ENCODE measurements at regions of chr2 and their contacts with region 1.

Region 1: DNA sequence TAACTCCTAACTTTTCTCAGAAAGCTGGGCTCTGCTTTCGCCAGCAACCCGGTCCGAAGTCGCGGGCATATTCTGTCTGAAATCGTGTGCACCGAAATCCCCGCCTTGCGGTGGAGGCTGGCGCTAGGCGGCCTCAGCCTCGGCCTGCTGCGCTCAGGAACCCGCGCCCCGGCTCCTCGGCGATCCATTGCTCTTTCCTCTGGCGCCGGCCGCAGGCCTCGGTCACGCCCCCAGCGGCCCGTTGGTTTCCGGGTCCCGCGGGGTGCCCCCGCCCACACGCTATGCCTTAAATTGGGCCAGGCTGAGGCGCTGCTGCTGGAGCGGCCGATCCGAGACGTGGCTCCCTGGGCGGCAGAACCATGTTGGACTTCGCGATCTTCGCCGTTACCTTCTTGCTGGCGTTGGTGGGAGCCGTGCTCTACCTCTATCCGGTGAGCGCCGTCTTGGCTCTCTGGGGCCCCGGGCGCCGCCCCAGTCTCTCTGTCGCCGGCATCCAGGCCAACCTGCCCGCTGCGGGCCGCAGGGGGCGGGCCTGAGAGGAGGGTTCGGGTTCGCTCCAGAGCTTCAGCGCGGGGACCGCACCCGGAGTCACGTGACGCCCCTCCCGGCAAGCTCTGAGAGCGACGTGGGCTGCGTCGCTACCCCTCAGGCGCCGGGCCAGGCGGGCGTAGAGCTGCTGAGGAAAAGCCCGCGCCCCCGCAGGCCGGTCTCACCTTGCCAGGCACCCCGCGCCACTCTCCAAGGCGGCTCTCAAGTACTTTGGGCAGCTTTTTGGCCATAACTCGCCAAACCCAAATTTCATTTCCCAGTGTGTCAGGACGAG is at the start of gene CYP20A1:
- DNase-seq: peak; percentile 93 to 98 (median 97)
- ATAC-seq: peak; percentile 79
- H3K4me3 ChIP-seq: peak within 1 kb of the TSS; percentile 88
- H3K4me3 Mint-ChIP-seq: peak within 1 kb of the TSS; percentile 96
- H3K27ac ChIP-seq: peak within 1 kb of the TSS; percentile 95 to 97
- H3K27ac Mint-ChIP-seq: peak within 1 kb of the TSS; percentile 99
- H3K4me1 ChIP-seq: peaks cover 28% of the 10 kb centered on the region
- H3K4me1 Mint-ChIP-seq: peaks cover 45% of the 10 kb centered on the region
- H3K27me3 ChIP-seq: no peaks in the 10 kb centered on the region
- H3K27me3 Mint-ChIP-seq: no peaks in the 10 kb centered on the region
- CTCF ChIP-seq: peak; percentile 12
- total RNA-seq, gene CYP20A1: 21.9 to 22.6 TPM

Region 2: GRCh38 chr2:202450785-202451184 is 788.1 kb before region 1 on chr2:
- CTCF ChIA-PET with region 1: no interaction called
- POLR2A ChIA-PET with region 1: no interaction called
- intact Hi-C with region 1: no loop called
- DNase-seq: no peak
- ATAC-seq: no peak
- H3K4me3 ChIP-seq: no peak overlapping the region
- H3K4me3 Mint-ChIP-seq: no peak overlapping the region
- H3K27ac ChIP-seq: no peak overlapping the region
- H3K27ac Mint-ChIP-seq: no peak overlapping the region
- H3K4me1 ChIP-seq: no peaks in the 10 kb centered on the region
- H3K4me1 Mint-ChIP-seq: no peaks in the 10 kb centered on the region
- H3K27me3 ChIP-seq: no peaks in the 10 kb centered on the region
- H3K27me3 Mint-ChIP-seq: no peaks in the 10 kb centered on the region
- CTCF ChIP-seq: no peak

Region 3: GRCh38 chr2:202643012-202643858 is 595.7 kb before region 1 on chr2:
- CTCF ChIA-PET with region 1: no interaction called
- POLR2A ChIA-PET with region 1: no interaction called
- intact Hi-C with region 1: loop called in 1 of 2 experiments (anchors 10 kb)
- DNase-seq: peak in 4 of 14 experiments; percentile 31 to 83 (median 62)
- ATAC-seq: peak; percentile 65
- H3K4me3 ChIP-seq: peak overlapping the region; percentile 43
- H3K4me3 Mint-ChIP-seq: peak overlapping the region; percentile 86
- H3K27ac ChIP-seq: peak overlapping the region; percentile 58 to 65
- H3K27ac Mint-ChIP-seq: no peak overlapping the region
- H3K4me1 ChIP-seq: peaks cover 57% of the 10 kb centered on the region
- H3K4me1 Mint-ChIP-seq: peaks cover 62% of the 10 kb centered on the region
- H3K27me3 ChIP-seq: no peaks in the 10 kb centered on the region
- H3K27me3 Mint-ChIP-seq: no peaks in the 10 kb centered on the region
- CTCF ChIP-seq: no peak

Region 4: GRCh38 chr2:202911512-202912341 is 327.2 kb before region 1 on chr2 and contains the starts of genes CARF and WDR12:
- CTCF ChIA-PET with region 1: interaction called, 3 read pairs
- POLR2A ChIA-PET with region 1: interaction called, 31 read pairs
- intact Hi-C with region 1: loop called (anchors 2 kb)
- DNase-seq: peak; percentile 80 to 95 (median 86)
- ATAC-seq: peak; percentile 81
- H3K4me3 ChIP-seq: peak within 1 kb of the TSS; percentile 79
- H3K4me3 Mint-ChIP-seq: peak within 1 kb of the TSS; percentile 98
- H3K27ac ChIP-seq: peak within 1 kb of the TSS; percentile 72 to 85
- H3K27ac Mint-ChIP-seq: peak within 1 kb of the TSS; percentile 90
- H3K4me1 ChIP-seq: peaks cover 9% of the 10 kb centered on the region
- H3K4me1 Mint-ChIP-seq: peaks cover 40% of the 10 kb centered on the region
- H3K27me3 ChIP-seq: no peaks in the 10 kb centered on the region
- H3K27me3 Mint-ChIP-seq: no peaks in the 10 kb centered on the region
- CTCF ChIP-seq: no peak
- total RNA-seq, gene CARF: 9.0 to 9.6 TPM
- total RNA-seq, gene WDR12: 6.2 to 7.7 TPM

Region 5: GRCh38 chr2:203014456-203015199 is 224.3 kb before region 1 on chr2 and contains the start of gene NBEAL1:
- CTCF ChIA-PET with region 1: interaction called, 3 read pairs
- POLR2A ChIA-PET with region 1: interaction called, 4 read pairs
- intact Hi-C with region 1: loop called (anchors 5 kb)
- DNase-seq: peak; percentile 86 to 99 (median 94)
- ATAC-seq: peak; percentile 87
- H3K4me3 ChIP-seq: peak within 1 kb of the TSS; percentile 88
- H3K4me3 Mint-ChIP-seq: peak within 1 kb of the TSS; percentile 93
- H3K27ac ChIP-seq: peak within 1 kb of the TSS; percentile 64 to 86
- H3K27ac Mint-ChIP-seq: peak within 1 kb of the TSS; percentile 93
- H3K4me1 ChIP-seq: peaks cover 15% of the 10 kb centered on the region
- H3K4me1 Mint-ChIP-seq: peaks cover 50% of the 10 kb centered on the region
- H3K27me3 ChIP-seq: no peaks in the 10 kb centered on the region
- H3K27me3 Mint-ChIP-seq: no peaks in the 10 kb centered on the region
- CTCF ChIP-seq: no peak
- total RNA-seq, gene NBEAL1: 8.3 to 11.2 TPM

Region 6: DNA sequence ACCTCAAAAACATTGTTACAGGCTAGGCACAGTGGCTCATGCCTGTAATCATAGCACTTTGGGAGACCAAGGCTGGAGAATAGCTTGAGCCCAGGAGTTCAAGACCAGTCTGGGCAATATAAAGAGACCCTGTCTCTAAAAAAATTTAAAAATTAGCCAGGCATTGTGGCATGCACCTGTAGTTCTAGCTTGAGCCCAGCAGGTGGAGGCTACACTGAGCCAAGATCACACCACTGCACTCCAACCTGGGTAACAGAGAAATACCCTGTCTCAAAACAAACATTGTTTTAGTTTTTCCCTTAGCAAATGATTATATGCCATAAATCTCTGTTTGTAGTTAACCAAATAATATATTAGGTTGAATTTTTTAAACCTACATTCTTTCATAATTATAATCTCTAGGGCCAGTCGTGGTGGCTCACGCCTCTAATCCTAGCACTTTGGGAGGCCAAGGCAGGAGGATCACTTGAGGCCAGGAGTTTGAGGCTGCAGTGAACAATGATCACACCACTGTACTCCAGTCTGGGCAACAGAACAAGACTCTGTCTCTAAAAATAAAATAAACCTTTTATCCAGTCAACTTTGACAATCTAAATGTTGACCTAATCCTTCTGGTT is 13.4 kb before region 1 on chr2:
- CTCF ChIA-PET with region 1: interaction called, 16 read pairs
- POLR2A ChIA-PET with region 1: interaction called, 20 read pairs
- intact Hi-C with region 1: loop called in 1 of 2 experiments (anchors 1 kb)
- DNase-seq: peak in 10 of 14 experiments; percentile 8 to 68 (median 20)
- ATAC-seq: peak; percentile 94
- H3K4me3 ChIP-seq: no peak overlapping the region
- H3K4me3 Mint-ChIP-seq: no peak overlapping the region
- H3K27ac ChIP-seq: no peak overlapping the region
- H3K27ac Mint-ChIP-seq: no peak overlapping the region
- H3K4me1 ChIP-seq: no peaks in the 10 kb centered on the region
- H3K4me1 Mint-ChIP-seq: no peaks in the 10 kb centered on the region
- H3K27me3 ChIP-seq: no peaks in the 10 kb centered on the region
- H3K27me3 Mint-ChIP-seq: no peaks in the 10 kb centered on the region
- CTCF ChIP-seq: peak; percentile 74

Region 7: DNA sequence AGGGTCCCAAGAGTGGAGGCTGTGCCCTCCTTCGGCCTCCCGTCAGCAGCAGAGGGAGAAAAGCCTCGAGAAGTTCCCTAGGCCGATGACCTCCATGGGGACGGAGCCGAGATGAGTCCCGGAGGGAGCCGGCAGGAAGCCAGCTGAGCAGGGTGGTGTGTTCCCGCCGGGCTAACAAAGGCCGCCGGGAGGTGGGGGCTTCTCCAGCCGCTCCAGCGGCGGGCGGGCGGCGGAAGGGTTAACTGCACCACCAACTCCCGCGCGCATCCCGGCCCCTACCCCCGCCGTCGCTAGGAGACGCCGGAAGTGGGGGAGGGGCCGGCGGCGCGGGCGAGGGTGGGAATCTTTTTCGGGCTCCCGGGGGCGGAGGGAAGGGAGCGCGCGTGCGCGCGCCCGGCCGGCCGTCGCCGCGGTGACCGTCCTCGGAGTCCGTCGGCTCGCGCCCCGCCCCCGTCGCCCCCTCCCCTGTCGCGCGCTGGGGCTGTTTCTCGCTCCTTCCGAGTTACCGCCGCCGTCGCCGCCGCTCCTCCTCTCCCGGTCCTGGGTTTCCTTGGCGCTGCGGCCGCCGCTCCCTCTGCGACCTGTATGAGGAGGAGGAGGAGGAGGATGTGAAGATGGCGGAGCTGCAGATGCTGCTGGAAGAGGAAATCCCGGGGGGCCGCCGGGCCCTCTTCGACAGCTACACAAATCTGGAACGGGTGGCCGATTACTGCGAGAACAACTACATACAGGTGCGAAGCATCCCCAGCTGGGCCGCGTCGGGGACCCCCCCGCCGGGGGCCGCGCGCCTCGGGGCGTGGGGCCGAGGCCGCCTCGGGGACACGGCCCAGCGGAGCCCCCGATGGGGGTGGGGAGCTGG is 89.2 kb after region 1 on chr2 and contains the start of gene ABI2:
- CTCF ChIA-PET with region 1: no interaction called
- POLR2A ChIA-PET with region 1: interaction called, 12 read pairs
- intact Hi-C with region 1: loop called in 1 of 2 experiments (anchors 5 kb)
- DNase-seq: peak; percentile 15 to 79 (median 56)
- ATAC-seq: peak; percentile 68
- H3K4me3 ChIP-seq: peak within 1 kb of the TSS; percentile 86
- H3K4me3 Mint-ChIP-seq: peak within 1 kb of the TSS; percentile 92
- H3K27ac ChIP-seq: peak within 1 kb of the TSS; percentile 54 to 70
- H3K27ac Mint-ChIP-seq: peak within 1 kb of the TSS; percentile 78
- H3K4me1 ChIP-seq: peaks cover 13% of the 10 kb centered on the region
- H3K4me1 Mint-ChIP-seq: peaks cover 32% of the 10 kb centered on the region
- H3K27me3 ChIP-seq: no peaks in the 10 kb centered on the region
- H3K27me3 Mint-ChIP-seq: no peaks in the 10 kb centered on the region
- CTCF ChIP-seq: no peak
- total RNA-seq, gene ABI2: 19.3 to 21.0 TPM

Measured in CD4-positive, alpha-beta T cell (primary cell).